ENCODE measurements at regions of chr18 and their contacts with region 1.

Region 1: DNA sequence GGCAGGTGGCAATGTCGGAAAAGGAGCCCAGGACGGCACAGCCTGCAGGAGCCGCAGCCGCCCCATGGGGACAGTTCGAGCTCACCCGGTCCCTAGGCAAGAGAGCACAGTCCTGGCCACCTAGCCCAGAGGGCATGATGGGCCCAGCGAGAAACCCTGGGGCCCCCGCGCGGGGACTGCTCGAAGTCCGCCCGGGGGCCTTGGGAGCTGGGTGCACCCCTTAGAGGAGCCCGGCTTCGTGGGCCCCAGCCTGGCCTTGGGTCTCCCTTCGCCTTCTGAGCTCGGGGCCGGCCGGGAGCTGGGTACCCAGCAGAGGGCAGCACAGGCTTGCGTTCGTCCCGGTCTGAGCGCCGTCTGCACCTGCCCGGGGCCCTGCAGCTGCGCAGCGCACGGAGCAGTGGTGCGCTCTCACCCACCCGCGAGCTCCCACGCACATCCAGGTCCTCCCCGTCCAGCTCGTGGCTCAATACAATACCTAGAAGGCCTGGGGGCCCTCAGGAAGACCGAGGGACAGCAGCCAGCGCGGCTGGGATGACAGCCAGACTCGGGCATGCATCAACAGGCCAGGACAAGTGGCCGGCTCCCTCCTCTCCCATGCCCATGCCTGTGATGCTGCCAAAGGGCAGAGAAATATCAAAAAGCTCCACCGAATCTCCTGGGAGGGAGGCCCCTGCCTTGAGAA is 96.2 kb upstream of the ZNF532 start:
- DNase-seq: peak; percentile 88
- CTCF ChIP-seq: peak; percentile 91

Region 2: GRCh38 chr18:58529714-58530354 is 238.6 kb before region 1 on chr18:
- CTCF ChIA-PET with region 1: interaction called, 366 read pairs
- POLR2A ChIA-PET with region 1: no interaction called
- DNase-seq: peak; percentile 63
- CTCF ChIP-seq: peak; percentile 89

Region 3: GRCh38 chr18:58723810-58724595 is 44.4 kb before region 1 on chr18:
- CTCF ChIA-PET with region 1: interaction called, 11 read pairs
- POLR2A ChIA-PET with region 1: no interaction called
- DNase-seq: no peak
- CTCF ChIP-seq: no peak

Region 4: GRCh38 chr18:58781627-58782194 is 13.3 kb after region 1 on chr18:
- CTCF ChIA-PET with region 1: interaction called, 169 read pairs
- POLR2A ChIA-PET with region 1: no interaction called
- DNase-seq: peak; percentile 72
- CTCF ChIP-seq: peak; percentile 89

Region 5: DNA sequence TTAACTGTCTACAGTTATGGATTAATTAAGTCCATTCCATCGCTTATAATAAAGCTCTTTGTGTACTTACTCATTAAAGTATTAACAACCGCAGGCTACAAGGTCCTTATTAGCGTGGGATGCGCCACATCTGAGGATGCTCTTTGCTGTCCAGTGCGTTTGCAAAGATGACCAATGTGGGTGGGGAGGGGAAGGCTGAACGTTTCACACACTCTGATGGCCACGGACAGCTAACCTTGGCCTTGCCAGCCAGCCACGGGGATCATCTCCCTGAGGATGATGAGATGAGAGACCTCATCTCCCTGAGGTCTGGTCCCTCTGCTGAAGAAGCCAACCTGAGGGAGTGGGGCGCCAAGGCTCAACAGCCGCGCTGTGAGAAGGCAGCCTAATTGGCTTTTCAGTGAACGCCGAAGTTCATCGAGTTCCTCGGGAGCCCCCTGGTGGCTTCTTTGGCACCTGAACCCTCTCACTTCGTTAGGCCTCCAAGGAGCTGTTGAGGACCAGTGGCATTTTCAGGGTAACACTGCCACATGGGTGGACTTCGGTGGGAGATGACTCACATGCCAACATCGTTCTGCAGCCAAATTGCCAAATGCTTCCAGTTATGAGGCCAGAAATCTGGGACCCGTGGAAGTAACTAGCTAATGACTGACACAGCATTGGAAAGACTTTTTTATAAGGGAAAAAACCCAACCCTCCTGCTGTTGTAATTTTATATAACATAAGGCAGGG is 301.9 kb after region 1 on chr18:
- CTCF ChIA-PET with region 1: interaction called, 371 read pairs
- POLR2A ChIA-PET with region 1: no interaction called
- DNase-seq: peak; percentile 76
- CTCF ChIP-seq: peak; percentile 93